ENCODE measurements at regions of chr14 and their contacts with region 1.

Region 1: GRCh38 chr14:61761959-61762786 is at the start of gene SNAPC1:
- DNase-seq: peak; percentile 95
- H3K4me3 ChIP-seq: peak within 1 kb of the TSS; percentile 81
- H3K4me3 Mint-ChIP-seq: peak within 1 kb of the TSS; percentile 99
- H3K27ac Mint-ChIP-seq: peak within 1 kb of the TSS; percentile 97
- H3K4me1 ChIP-seq: 0 out of 2 replicates have a peak, but pooled peaks cover 5% of the 10 kb centered on the region
- H3K4me1 Mint-ChIP-seq: peaks cover 7% of the 10 kb centered on the region
- H3K27me3 ChIP-seq: no peaks in the 10 kb centered on the region
- H3K27me3 Mint-ChIP-seq: no peaks in the 10 kb centered on the region
- CTCF ChIP-seq: no peak
- total RNA-seq, gene SNAPC1: 5.1 and 6.0 TPM in 2 replicates

Region 2: GRCh38 chr14:61269321-61270083 is 492.7 kb before region 1 on chr14:
- CTCF ChIA-PET with region 1: no interaction called
- POLR2A ChIA-PET with region 1: no interaction called
- intact Hi-C with region 1: loop called (anchors 10 kb)
- DNase-seq: peak; percentile 79 to 80
- H3K4me3 ChIP-seq: peak overlapping the region; percentile 40
- H3K4me3 Mint-ChIP-seq: peak overlapping the region; percentile 53
- H3K27ac Mint-ChIP-seq: no peak overlapping the region
- H3K4me1 ChIP-seq: no peaks in the 10 kb centered on the region
- H3K4me1 Mint-ChIP-seq: no peaks in the 10 kb centered on the region
- H3K27me3 ChIP-seq: no peaks in the 10 kb centered on the region
- H3K27me3 Mint-ChIP-seq: peaks cover 10% of the 10 kb centered on the region
- CTCF ChIP-seq: peak; percentile 75 to 79

Region 3: DNA sequence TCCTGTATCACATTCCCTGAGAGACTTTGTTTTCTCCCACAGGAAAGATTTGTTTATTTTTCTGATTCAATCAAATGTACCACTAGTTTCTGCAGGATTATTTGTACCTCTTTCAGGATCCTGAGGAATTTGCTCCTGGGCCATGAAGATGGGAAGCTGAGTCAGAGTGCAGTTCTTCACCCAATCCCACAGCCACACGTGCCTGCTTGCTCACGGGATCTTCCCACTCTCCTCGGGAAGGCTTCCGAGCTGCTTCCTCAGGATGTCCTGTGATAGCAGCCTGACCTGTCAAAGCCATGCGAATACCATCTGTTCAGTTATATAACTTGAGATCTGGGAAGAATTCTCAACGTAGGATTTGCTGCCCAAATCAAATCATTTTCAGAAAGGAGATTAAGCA is 108.7 kb before region 1 on chr14:
- CTCF ChIA-PET with region 1: no interaction called
- POLR2A ChIA-PET with region 1: no interaction called
- intact Hi-C with region 1: no loop called
- DNase-seq: no peak
- H3K4me3 ChIP-seq: no peak overlapping the region
- H3K4me3 Mint-ChIP-seq: no peak overlapping the region
- H3K27ac Mint-ChIP-seq: no peak overlapping the region
- H3K4me1 ChIP-seq: no peaks in the 10 kb centered on the region
- H3K4me1 Mint-ChIP-seq: no peaks in the 10 kb centered on the region
- H3K27me3 ChIP-seq: no peaks in the 10 kb centered on the region
- H3K27me3 Mint-ChIP-seq: peaks cover 3% of the 10 kb centered on the region
- CTCF ChIP-seq: no peak

Region 4: DNA sequence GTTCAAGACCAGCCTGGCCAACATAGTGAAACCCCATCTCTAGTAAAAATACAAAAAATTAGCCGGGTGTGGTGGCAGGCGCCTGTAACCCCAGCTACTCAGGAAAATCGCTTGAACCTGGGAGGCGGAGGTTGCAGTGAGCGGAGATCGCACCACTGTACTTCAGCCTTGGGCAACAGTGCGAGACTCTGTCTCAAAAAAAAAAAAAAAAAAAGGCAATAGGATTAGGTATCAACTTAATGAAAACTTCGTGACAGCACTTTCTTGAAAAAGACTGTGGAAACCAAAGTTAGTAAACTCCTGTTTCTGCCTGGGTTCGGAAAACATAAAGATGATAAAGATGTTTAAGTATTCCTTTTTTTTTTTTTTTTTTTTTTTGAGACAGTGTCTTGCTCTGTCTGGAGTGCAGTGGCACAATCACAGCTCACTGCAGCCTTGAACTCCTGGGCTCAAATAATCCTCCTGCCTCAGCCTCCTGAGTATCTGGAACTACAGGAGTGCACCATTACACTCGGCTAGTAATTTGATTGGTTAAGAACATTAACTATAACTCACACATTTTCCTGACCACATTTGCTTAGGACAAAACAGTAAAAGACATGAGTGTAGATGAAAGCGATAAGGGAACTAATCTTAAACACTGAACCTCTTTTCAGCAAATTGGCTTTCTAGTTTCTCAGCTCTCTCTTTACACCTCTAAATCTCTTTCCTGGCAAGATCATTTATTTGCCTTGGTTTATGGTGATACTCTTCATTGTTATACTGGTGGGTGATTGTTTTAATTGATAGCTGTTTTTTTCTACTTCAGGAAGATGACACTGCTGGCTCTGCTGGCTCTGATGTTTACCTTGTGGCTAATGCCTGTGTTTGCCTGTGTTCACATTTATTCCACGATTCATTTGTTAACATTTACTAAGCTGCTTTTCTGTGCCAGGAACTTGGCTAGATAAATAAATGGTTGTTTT is 51.0 kb before region 1 on chr14:
- CTCF ChIA-PET with region 1: no interaction called
- POLR2A ChIA-PET with region 1: no interaction called
- intact Hi-C with region 1: no loop called
- DNase-seq: no peak
- H3K4me3 ChIP-seq: no peak overlapping the region
- H3K4me3 Mint-ChIP-seq: no peak overlapping the region
- H3K27ac Mint-ChIP-seq: no peak overlapping the region
- H3K4me1 ChIP-seq: peaks cover 25% of the 10 kb centered on the region
- H3K4me1 Mint-ChIP-seq: peaks cover 30% of the 10 kb centered on the region
- H3K27me3 ChIP-seq: no peaks in the 10 kb centered on the region
- H3K27me3 Mint-ChIP-seq: no peaks in the 10 kb centered on the region
- CTCF ChIP-seq: no peak

Region 5: DNA sequence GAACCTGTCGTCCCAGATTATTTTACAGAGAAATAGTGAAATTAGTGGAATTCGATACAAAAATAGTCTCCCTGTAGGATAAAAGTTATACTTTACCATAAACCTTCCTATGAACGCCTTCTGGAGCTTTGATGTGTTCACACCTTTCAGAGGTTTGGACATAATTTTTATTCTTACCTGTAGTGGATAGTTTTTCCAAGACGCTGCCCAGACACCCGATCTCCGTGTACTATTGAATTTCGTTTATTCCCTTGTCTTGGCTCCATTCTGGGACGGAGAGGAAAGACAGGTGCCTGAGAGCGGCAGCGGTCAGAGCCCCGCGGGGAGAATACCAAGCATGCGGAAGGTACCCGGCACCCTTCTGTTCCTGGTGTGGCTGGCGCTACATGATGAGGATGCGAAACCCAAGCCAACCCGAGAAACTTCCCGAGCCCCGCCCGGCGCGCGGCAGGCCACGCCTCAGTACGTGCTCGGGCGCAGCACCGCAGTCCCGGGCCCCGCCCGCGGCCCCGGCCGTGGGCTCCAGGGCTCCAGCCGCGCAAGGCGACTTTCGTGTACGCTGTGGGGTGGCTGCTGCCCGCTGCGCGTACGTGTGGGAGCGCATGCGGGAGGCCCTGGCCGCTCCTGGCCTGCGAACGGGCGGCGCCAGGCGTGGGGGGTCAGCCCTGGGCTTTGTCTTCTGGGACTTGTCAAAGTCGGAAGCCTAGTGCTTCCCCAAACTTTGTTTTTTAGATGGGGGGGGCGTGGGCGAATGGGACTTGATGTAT is 11.3 kb before region 1 on chr14:
- CTCF ChIA-PET with region 1: interaction called, 9 read pairs
- POLR2A ChIA-PET with region 1: interaction called, 13 read pairs
- intact Hi-C with region 1: loop called (anchors 1 kb)
- DNase-seq: peak; percentile 82 to 86
- H3K4me3 ChIP-seq: peak overlapping the region; percentile 70
- H3K4me3 Mint-ChIP-seq: peak overlapping the region; percentile 80
- H3K27ac Mint-ChIP-seq: peak overlapping the region; percentile 61
- H3K4me1 ChIP-seq: peaks cover 40% of the 10 kb centered on the region
- H3K4me1 Mint-ChIP-seq: peaks cover 15% of the 10 kb centered on the region
- H3K27me3 ChIP-seq: no peaks in the 10 kb centered on the region
- H3K27me3 Mint-ChIP-seq: no peaks in the 10 kb centered on the region
- CTCF ChIP-seq: no peak

Region 6: DNA sequence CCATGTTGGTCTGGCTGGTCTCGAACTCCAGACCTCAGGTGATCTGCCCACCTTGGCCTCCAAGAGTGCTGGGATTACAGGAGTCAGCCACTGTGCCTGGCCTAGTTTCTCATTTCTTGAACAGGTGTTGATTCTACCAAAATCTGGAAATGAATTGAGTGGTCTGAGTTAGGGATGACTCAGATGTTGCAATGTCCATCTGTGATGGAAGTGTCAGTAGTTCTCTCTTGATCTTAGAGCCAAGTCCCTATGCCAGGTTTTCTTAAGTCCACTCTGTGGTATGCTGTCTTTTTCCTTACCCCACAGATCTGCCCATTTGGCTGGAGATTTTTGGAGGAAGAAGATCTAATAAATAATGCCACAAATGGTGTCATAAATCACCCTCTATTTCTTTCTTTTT is 12.7 kb after region 1 on chr14:
- CTCF ChIA-PET with region 1: no interaction called
- POLR2A ChIA-PET with region 1: no interaction called
- intact Hi-C with region 1: no loop called
- DNase-seq: no peak
- H3K4me3 ChIP-seq: no peak overlapping the region
- H3K4me3 Mint-ChIP-seq: no peak overlapping the region
- H3K27ac Mint-ChIP-seq: no peak overlapping the region
- H3K4me1 ChIP-seq: no peaks in the 10 kb centered on the region
- H3K4me1 Mint-ChIP-seq: no peaks in the 10 kb centered on the region
- H3K27me3 ChIP-seq: no peaks in the 10 kb centered on the region
- H3K27me3 Mint-ChIP-seq: no peaks in the 10 kb centered on the region
- CTCF ChIP-seq: no peak

Region 7: DNA sequence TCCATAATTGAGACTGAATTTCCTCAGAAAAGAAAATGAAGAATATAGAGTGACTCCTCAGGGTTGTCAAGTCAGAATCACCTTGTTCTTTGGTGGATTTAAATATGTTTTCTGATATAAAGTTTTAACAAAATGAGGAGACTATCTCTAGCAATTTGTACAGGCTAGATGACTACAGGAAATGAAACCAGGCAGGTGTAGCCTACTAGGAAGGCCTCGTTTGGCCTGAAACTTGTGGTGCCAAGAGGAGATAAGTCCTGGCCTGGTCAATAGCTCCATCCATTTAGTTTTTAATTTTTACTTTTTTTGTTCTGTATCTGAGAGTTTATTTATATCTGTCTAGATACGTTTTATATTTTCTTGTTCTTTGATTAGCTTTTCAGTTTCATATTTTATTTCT is 41.6 kb after region 1 on chr14:
- CTCF ChIA-PET with region 1: no interaction called
- POLR2A ChIA-PET with region 1: interaction called, 12 read pairs
- intact Hi-C with region 1: no loop called
- DNase-seq: no peak
- H3K4me3 ChIP-seq: no peak overlapping the region
- H3K4me3 Mint-ChIP-seq: no peak overlapping the region
- H3K27ac Mint-ChIP-seq: no peak overlapping the region
- H3K4me1 ChIP-seq: no peaks in the 10 kb centered on the region
- H3K4me1 Mint-ChIP-seq: no peaks in the 10 kb centered on the region
- H3K27me3 ChIP-seq: no peaks in the 10 kb centered on the region
- H3K27me3 Mint-ChIP-seq: no peaks in the 10 kb centered on the region
- CTCF ChIP-seq: no peak

Measured in Caco-2 (cell line).